ENCODE measurements at regions of chr12 and their contacts with region 1.

Region 1: GRCh38 chr12:1583421-1584078 is 10.8 kb downstream of the FBXL14 start:
- DNase-seq: no peak
- H3K4me3 ChIP-seq: no peak overlapping the region
- H3K27ac ChIP-seq: no peak overlapping the region
- H3K4me1 ChIP-seq: peaks cover 11% of the 10 kb centered on the region
- H3K27me3 ChIP-seq: no peaks in the 10 kb centered on the region
- CTCF ChIP-seq: peak; percentile 81 to 92 (median 82)
- POLR2A ChIP-seq: no peak

Region 2: GRCh38 chr12:1117970-1118563 is 465.5 kb before region 1 on chr12:
- intact Hi-C with region 1: loop called (anchors 10 kb)
- DNase-seq: no peak
- H3K4me3 ChIP-seq: no peak overlapping the region
- H3K27ac ChIP-seq: no peak overlapping the region
- H3K4me1 ChIP-seq: no peaks in the 10 kb centered on the region
- H3K27me3 ChIP-seq: no peaks in the 10 kb centered on the region
- CTCF ChIP-seq: peak; percentile 59 to 90 (median 87)
- POLR2A ChIP-seq: no peak

Region 3: DNA sequence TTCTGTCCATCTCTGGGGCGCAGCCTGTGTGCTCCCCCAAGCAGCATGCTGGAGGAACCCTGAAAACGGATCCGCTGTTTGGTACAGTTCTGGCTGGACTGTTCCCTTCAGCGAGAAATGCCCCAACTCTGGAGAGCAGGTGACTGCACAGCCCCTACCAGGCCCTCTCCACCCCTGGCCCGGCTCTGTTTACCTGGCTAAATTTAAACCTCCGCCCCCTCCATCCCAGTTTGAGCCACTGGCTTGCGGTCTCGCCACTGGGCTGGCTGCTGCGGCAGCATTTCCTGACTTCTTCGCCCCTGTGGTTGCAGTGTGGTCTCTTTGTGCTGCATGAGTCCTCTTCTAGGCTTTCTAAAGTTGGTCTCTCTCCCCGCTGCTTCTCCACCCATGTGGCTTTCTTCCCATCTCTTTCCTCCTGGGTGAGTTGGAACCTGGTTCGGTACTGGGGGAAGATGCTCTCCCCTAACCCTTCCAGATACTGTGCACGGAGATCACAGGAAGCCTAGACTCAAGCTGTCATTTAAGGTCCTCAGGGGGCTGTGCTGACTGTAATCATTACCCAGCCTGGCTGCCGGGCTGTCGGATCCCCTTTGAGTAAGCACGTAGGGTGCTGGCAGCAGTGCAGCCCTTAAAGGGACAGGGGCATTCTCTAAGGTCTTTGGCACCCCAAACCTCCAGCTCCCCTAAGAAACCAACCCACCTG is 49.8 kb before region 1 on chr12:
- intact Hi-C with region 1: no loop called
- DNase-seq: peak in 1 of 2 donors; percentile 58
- H3K4me3 ChIP-seq: no peak overlapping the region
- H3K27ac ChIP-seq: no peak overlapping the region
- H3K4me1 ChIP-seq: peaks cover 10% of the 10 kb centered on the region
- H3K27me3 ChIP-seq: no peaks in the 10 kb centered on the region
- CTCF ChIP-seq: no peak
- POLR2A ChIP-seq: no peak

Measured in vagina (tissue), 2 donors.